Mucosa of descending colon (tissue), 3 donors: ENCODE measurements at regions of chr10 and their contacts with region 1.

Region 1: GRCh38 chr10:110893559-110894179 is 21.9 kb downstream of the PDCD4 start:
- DNase-seq: no peak
- ATAC-seq: peak; percentile 82
- H3K4me3 ChIP-seq: no peak overlapping the region
- H3K4me1 ChIP-seq: peaks cover 5% of the 10 kb centered on the region
- CTCF ChIP-seq: no peak

Region 2: DNA sequence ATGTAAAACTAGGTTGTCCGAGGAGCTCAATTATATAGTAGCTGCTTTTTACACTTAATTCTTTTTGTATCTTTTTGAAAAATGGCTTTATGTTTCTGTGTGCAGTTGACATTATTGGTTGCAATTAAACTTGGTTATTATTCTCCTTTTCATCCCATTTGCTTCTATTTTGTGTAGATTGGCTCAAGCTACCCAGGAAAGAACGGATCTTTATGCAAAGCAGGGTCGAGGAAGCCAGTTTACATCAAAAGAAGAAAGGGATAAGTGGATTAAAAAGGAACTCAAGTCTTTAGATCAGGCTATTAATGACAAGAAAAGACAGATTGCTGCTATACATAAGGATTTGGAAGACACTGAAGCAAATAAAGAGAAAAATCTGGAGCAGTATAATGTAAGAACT is 309.7 kb before region 1 on chr10:
- intact Hi-C with region 1: loop called in 1 of 2 experiments (anchors 10 kb)
- DNase-seq: no peak
- ATAC-seq: no peak
- H3K4me3 ChIP-seq: no peak overlapping the region
- H3K4me1 ChIP-seq: no peaks in the 10 kb centered on the region
- CTCF ChIP-seq: no peak

Region 3: GRCh38 chr10:111316722-111317212 is 423.1 kb after region 1 on chr10:
- intact Hi-C with region 1: no loop called
- DNase-seq: no peak
- ATAC-seq: no peak
- H3K4me3 ChIP-seq: no peak overlapping the region
- H3K4me1 ChIP-seq: no peaks in the 10 kb centered on the region
- CTCF ChIP-seq: no peak